Activated CD4-positive, alpha-beta T cell treated with anti-CD3 and anti-CD28 coated beads for 36 hours (primary cell): ENCODE measurements at regions of chr7 and their contacts with region 1.

Region 1: DNA sequence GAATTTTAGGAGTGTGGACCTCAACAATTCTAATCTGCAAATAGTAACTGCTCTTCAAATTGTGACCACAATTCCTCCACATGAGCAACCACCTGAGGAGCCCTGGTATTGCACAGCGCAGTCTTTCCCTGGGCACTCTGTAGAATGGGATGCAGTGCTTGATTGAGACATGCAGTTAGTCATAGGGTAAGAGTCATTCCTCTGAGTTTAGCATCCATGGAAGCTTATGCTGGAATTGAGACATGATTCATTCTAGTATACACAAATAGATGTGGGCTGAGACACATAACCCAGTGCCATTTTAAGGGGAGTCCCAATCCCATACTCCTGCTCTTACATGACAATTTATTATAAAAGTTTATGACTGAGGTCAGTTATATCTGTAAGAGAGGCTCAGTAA is 582.3 kb upstream of the CNTNAP2 start:
- DNase-seq: no peak
- ATAC-seq: no peak
- H3K4me3 Mint-ChIP-seq: no peak overlapping the region
- H3K27ac Mint-ChIP-seq: no peak overlapping the region
- H3K4me1 Mint-ChIP-seq: no peaks in the 10 kb centered on the region
- H3K27me3 Mint-ChIP-seq: no peaks in the 10 kb centered on the region

Region 2: DNA sequence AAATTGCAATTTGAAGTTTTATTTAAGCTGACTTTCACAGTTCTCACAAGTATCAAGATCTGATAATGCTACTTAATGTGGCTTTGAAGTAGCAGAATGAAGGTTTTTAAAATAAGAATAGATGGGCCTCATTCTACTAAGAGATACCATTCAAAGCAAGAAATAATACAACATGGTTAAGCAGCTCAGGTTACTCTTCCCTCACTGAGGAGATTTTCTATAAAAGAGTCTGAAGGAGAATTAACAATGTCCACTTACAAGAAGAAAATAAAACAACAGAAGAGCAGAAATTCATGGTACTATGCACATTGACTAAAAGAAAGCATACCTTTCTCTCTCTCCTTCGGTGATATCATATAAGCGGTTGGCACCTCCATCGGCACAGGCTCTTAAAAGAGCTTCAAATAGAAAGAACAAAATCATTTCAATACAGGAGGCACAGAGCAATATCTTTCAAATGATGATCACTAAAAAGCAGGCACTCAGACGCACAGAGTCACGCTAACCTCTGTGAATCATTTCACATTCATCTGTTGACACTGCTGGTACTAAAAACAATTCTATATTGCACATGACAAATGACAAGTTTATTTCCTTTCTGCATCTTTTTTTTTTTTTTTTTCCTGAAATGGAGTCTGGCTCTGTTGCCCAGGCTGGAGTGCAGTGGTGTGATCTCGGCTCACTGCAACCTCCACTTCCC is 851.6 kb before region 1 on chr7:
- CTCF ChIA-PET with region 1: no interaction called
- POLR2A ChIA-PET with region 1: interaction called, 12 read pairs
- intact Hi-C with region 1: no loop called
- DNase-seq: no peak
- ATAC-seq: no peak
- H3K4me3 Mint-ChIP-seq: no peak overlapping the region
- H3K27ac Mint-ChIP-seq: no peak overlapping the region
- H3K4me1 Mint-ChIP-seq: no peaks in the 10 kb centered on the region
- H3K27me3 Mint-ChIP-seq: no peaks in the 10 kb centered on the region